ENCODE measurements at regions of chr16 and their contacts with region 1.

Region 1: GRCh38 chr16:3190949-3191353 is 2.9 kb downstream of the OR1F1 start:
- DNase-seq: no peak
- H3K4me3 Mint-ChIP-seq: peak overlapping the region; percentile 54
- H3K27ac Mint-ChIP-seq: peak overlapping the region; percentile 46
- H3K4me1 Mint-ChIP-seq: peaks cover 25% of the 10 kb centered on the region
- H3K27me3 Mint-ChIP-seq: peaks cover 70% of the 10 kb centered on the region
- CTCF ChIP-seq: no peak

Region 2: DNA sequence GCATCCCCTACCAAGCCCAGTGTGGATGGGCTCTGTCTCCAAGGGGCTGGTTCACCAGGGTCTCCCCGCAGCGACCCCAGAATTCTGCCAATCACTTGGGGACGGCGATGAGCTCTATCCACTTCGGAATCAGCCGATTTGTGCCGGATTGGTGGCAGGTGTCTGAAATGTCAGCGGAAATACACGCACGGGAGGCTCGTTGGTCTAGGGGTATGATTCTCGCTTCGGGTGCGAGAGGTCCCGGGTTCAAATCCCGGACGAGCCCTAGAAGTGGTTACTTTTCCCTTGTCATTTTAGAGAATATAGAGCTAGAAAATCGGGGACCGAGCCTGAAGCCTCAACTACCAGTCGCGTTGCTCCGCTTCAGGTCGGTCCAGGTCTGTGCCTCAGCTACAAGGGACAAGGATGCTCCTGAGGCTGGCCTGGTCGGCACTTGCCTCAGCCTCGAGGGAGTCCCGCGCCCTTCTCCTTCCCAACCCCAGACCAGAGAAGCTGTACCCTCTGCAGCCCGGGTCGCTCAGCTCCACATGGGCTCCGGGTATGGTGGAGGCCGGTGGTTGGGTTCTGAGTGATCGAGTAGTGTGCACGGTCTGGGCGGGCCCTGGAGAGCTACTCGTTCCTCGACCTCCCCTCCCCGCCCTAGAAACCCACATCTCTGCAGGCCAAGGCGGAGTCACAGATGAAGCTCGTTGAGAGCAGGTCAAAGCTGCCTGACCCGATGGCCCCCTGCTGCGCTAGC is 18.9 kb before region 1 on chr16:
- CTCF ChIA-PET with region 1: interaction called, 12 read pairs
- intact Hi-C with region 1: no loop called
- DNase-seq: peak; percentile 66
- H3K4me3 Mint-ChIP-seq: peak overlapping the region; percentile 54
- H3K27ac Mint-ChIP-seq: peak overlapping the region; percentile 78
- H3K4me1 Mint-ChIP-seq: peaks cover 28% of the 10 kb centered on the region
- H3K27me3 Mint-ChIP-seq: peaks cover 80% of the 10 kb centered on the region
- CTCF ChIP-seq: no peak

Measured in Calu3 (cell line).